MCF 10A (cell line): ENCODE measurements at regions of chr17 and their contacts with region 1.

Region 1: GRCh38 chr17:15091825-15092224 is 173.3 kb downstream of the PMP22 start:
- DNase-seq: peak; percentile 53
- H3K4me3 Mint-ChIP-seq: no peak overlapping the region
- H3K27ac Mint-ChIP-seq: no peak overlapping the region
- H3K4me1 Mint-ChIP-seq: no peaks in the 10 kb centered on the region
- H3K27me3 Mint-ChIP-seq: peaks cover 26% of the 10 kb centered on the region
- CTCF ChIP-seq: peak; percentile 38

Region 2: GRCh38 chr17:14942526-14943190 is 149.2 kb before region 1 on chr17:
- CTCF ChIA-PET with region 1: no interaction called
- POLR2A ChIA-PET with region 1: no interaction called
- intact Hi-C with region 1: loop called (anchors 2 kb)
- DNase-seq: peak; percentile 91
- H3K4me3 Mint-ChIP-seq: no peak overlapping the region
- H3K27ac Mint-ChIP-seq: peak overlapping the region; percentile 73
- H3K4me1 Mint-ChIP-seq: peaks cover 27% of the 10 kb centered on the region
- H3K27me3 Mint-ChIP-seq: peaks cover 14% of the 10 kb centered on the region
- CTCF ChIP-seq: no peak